Activated CD4-positive, alpha-beta T cell treated with anti-CD3 and anti-CD28 coated beads, Interleukin-2, amount 10 ng/mL, durations not matched to agents 24 days and 14 days (primary cell): ENCODE measurements at regions of chr16 and their contacts with region 1.

Region 1: DNA sequence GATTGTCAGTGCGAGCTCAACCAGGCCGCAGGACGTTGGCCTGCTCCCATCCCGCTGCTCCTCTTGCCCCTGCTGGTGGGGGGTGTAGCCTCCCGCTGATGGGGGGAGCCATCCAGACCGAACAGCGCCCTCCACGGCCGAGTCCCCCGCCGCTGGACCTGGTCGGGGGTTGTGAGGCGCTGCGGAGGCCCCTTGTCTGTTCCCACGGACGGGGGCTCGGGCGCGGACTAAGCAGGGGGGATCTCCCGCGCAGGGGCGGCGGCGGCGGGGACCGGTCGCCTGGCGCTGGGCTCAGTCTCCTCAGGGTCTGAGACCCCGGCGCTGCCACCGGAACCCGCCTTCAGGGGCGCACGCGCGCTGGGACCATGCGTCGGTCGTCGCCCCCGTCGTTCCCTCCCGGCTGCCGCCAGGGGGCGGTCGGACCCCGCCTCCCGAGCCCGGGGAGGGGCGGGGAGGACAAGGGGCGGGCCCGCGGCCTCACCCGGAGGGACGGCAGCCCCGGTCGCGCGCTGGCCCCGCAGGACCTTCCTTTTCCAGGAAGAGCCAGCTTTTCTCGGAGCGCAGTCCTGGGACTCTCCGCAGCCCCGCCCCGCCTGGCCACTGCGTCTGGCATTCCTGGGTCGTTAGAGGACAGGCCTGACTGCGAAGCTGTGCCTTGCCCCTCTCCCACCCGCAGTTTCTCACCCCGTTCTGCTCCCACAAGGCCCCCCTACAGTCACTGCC is 6.3 kb upstream of the IL32 start:
- DNase-seq: peak; percentile 98
- H3K4me3 Mint-ChIP-seq: peak overlapping the region; percentile 89
- H3K27ac Mint-ChIP-seq: peak overlapping the region; percentile 91
- H3K4me1 Mint-ChIP-seq: peaks cover 52% of the 10 kb centered on the region
- H3K27me3 Mint-ChIP-seq: no peaks in the 10 kb centered on the region

Region 2: DNA sequence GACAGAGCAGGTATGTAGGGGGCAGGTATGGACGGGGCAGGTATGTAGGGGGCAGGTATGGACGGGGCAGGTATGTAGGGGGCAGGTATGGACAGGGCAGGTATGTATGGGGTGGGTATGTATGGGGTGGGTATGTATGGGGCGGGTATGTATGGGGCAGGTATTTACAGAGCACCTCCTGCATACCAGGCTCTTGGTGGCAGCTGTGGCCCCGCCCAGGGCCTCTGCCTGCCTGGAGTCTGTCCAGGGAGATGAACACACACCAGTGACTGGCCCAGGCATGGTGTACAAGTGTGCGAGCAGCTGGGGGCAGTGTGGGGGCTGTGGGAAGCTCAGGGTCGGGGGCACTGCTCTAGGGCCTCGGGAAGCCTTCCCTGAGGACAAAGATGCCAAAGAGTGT is 1109.1 kb before region 1 on chr16:
- intact Hi-C with region 1: no loop called
- DNase-seq: no peak
- H3K4me3 Mint-ChIP-seq: no peak overlapping the region
- H3K27ac Mint-ChIP-seq: no peak overlapping the region
- H3K4me1 Mint-ChIP-seq: peaks cover 2% of the 10 kb centered on the region
- H3K27me3 Mint-ChIP-seq: peaks cover 3% of the 10 kb centered on the region

Region 3: GRCh38 chr16:2739625-2740435 is 319.3 kb before region 1 on chr16:
- intact Hi-C with region 1: no loop called
- DNase-seq: peak; percentile 72
- H3K4me3 Mint-ChIP-seq: no peak overlapping the region
- H3K27ac Mint-ChIP-seq: no peak overlapping the region
- H3K4me1 Mint-ChIP-seq: peaks cover 1% of the 10 kb centered on the region
- H3K27me3 Mint-ChIP-seq: no peaks in the 10 kb centered on the region

Region 4: GRCh38 chr16:3003582-3004302 is 55.4 kb before region 1 on chr16:
- intact Hi-C with region 1: loop called (anchors 5 kb)
- DNase-seq: peak; percentile 99
- H3K4me3 Mint-ChIP-seq: peak overlapping the region; percentile 69
- H3K27ac Mint-ChIP-seq: peak overlapping the region; percentile 62
- H3K4me1 Mint-ChIP-seq: peaks cover 23% of the 10 kb centered on the region
- H3K27me3 Mint-ChIP-seq: peaks cover 16% of the 10 kb centered on the region

Region 5: DNA sequence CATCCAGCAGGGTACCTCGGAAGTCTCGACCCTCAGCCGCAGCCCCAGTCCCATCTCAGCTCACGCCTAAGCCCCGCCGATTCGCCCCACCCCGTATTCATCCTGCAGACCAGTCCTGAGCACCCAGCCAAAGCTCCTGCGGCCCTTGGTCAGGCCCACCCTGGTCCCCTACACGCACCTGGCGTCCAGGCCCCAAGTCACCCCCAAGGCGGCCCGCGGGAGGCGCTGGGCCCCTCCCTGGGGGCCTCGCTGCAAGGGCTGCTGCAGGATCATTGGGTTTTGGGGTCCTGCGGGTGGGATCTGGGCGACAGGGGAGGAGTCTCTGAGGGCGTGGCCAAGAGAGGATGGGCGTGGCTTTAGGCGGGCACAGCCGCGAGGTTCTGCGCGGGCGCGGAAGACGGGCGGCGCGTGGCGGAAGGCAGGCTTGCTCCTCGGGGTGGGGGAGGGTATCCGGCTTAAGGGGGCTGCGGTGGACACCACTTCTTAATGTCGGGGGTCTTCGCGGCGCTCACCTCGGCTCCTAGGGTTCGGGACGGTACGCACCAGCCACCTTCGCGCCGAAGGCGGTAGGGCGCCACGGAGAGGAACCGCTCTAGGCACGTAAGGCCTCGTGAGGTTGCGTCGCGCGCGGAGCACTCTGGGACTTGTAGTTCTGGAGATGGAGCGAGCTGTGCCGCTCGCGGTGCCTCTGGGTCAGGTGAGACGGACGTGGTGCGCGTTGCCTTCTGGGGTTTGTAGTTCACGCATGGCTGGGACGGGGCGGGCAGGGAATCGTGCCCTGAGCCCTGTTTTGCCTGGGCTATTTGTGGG is 35.3 kb before region 1 on chr16 and contains the starts of genes HCFC1R1 and THOC6:
- intact Hi-C with region 1: loop called (anchors 2 kb)
- DNase-seq: peak; percentile 99
- H3K4me3 Mint-ChIP-seq: peak within 1 kb of the TSS; percentile 83
- H3K27ac Mint-ChIP-seq: peak within 1 kb of the TSS; percentile 95
- H3K4me1 Mint-ChIP-seq: peaks cover 45% of the 10 kb centered on the region
- H3K27me3 Mint-ChIP-seq: peaks cover 2% of the 10 kb centered on the region
- total RNA-seq, gene HCFC1R1: 29.4 TPM in 2 replicates
- total RNA-seq, gene THOC6: 55.3 and 57.0 TPM in 2 replicates

Region 6: DNA sequence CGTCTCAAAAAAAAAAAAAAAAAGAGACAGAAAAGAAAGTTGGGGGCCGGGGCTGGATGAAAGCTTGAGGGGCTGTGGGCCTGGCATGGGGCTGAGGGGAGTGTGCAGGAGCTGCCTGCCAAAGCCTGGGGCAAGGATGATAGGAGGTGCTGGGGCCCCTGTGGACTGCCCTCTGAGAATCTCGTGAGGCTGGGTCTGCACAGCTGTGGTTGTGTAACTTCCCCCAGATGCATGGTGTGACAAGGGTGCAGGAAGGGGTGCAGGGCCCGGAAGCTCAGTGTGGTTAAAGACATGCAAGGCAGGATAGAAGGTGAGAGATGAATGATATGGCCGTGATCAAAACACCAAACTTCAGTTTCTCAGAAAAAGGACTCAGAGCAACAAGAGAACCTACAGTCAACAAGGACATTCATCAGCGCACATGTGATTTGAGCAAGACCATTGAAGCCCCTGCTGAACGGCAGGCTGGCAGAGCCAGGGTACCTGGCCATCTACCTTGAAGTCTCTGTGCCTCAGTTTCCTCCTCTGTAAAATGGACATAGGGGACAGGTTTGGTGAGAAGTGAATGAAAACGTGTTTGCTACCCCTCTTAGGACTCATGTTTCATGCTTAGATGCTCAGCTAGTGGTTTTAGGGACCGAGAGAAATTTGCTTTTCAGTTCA is 15.8 kb after region 1 on chr16:
- intact Hi-C with region 1: loop called (anchors 2 kb)
- DNase-seq: peak; percentile 96
- H3K4me3 Mint-ChIP-seq: peak overlapping the region; percentile 80
- H3K27ac Mint-ChIP-seq: peak overlapping the region; percentile 99
- H3K4me1 Mint-ChIP-seq: peaks cover 71% of the 10 kb centered on the region
- H3K27me3 Mint-ChIP-seq: no peaks in the 10 kb centered on the region

Region 7: GRCh38 chr16:3099732-3100499 is 40.8 kb after region 1 on chr16:
- intact Hi-C with region 1: loop called (anchors 2 kb)
- DNase-seq: peak; percentile 97
- H3K4me3 Mint-ChIP-seq: peak overlapping the region; percentile 85
- H3K27ac Mint-ChIP-seq: peak overlapping the region; percentile 86
- H3K4me1 Mint-ChIP-seq: peaks cover 38% of the 10 kb centered on the region
- H3K27me3 Mint-ChIP-seq: peaks cover 2% of the 10 kb centered on the region

Region 8: GRCh38 chr16:3129137-3130131 is 70.3 kb after region 1 on chr16:
- intact Hi-C with region 1: loop called (anchors 1 kb)
- DNase-seq: peak; percentile 95
- H3K4me3 Mint-ChIP-seq: peak overlapping the region; percentile 93
- H3K27ac Mint-ChIP-seq: peak overlapping the region; percentile 87
- H3K4me1 Mint-ChIP-seq: peaks cover 48% of the 10 kb centered on the region
- H3K27me3 Mint-ChIP-seq: no peaks in the 10 kb centered on the region